CD4-positive, alpha-beta memory T cell (primary cell): ENCODE measurements at regions of chr6 and their contacts with region 1.

Region 1: DNA sequence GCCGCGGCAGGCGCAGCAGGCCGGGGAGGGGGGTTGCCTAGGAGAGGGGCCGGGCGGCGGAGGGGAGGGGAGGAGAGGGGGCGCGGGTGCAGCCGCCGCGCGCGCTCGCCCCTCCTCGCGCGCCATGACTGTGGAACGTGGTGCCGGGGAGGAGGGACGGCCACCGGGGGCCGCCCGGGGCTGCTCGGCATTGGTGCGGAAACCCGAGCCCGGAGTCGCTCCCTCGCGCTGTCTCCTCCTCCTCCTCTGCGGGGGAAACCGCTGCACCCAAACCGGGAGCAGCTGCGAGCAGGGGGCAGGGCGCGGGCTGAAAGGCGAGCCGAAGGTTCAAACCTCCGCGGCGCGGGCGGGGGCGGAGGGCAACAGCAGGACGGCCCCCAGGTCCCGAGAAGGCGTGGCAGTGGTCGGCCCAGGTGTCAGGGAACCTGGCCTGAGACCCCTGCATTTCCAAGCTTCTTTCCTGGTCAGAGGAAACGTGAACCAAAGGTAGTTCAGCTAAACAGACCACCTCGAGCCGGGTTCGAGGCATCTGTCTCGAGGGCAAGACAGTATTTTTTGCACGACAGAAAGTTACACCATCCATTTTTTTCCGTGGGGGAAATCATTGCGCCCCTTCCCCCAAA is 1.4 kb upstream of the TRERF1 start:
- DNase-seq: peak; percentile 75 to 82 (median 77)
- H3K4me3 ChIP-seq: peak overlapping the region; percentile 68 to 72
- H3K4me3 Mint-ChIP-seq: peak overlapping the region; percentile 93 to 100 (median 96)
- H3K27ac ChIP-seq: peak overlapping the region; percentile 36
- H3K27ac Mint-ChIP-seq: peak overlapping the region in 3 of 7 donors; percentile 10 to 80 (median 75)
- H3K4me1 ChIP-seq: peaks cover 31% of the 10 kb centered on the region
- H3K4me1 Mint-ChIP-seq: peaks cover 25 to 53% (median 29%) of the 10 kb centered on the region in 4 donors
- H3K27me3 ChIP-seq: no peaks in the 10 kb centered on the region
- H3K27me3 Mint-ChIP-seq: no peaks in the 10 kb centered on the region

Region 2: GRCh38 chr6:42315991-42316378 is 137.2 kb before region 1 on chr6:
- CTCF ChIA-PET with region 1: interaction called, 11 read pairs
- POLR2A ChIA-PET with region 1: no interaction called
- intact Hi-C with region 1: no loop called
- DNase-seq: no peak
- H3K4me3 ChIP-seq: no peak overlapping the region
- H3K4me3 Mint-ChIP-seq: no peak overlapping the region
- H3K27ac ChIP-seq: no peak overlapping the region
- H3K27ac Mint-ChIP-seq: peak overlapping the region in 4 of 7 donors; percentile 37 to 72 (median 57)
- H3K4me1 ChIP-seq: peaks cover 36% of the 10 kb centered on the region
- H3K4me1 Mint-ChIP-seq: peaks cover 45 to 63% (median 56%) of the 10 kb centered on the region in 4 donors
- H3K27me3 ChIP-seq: no peaks in the 10 kb centered on the region
- H3K27me3 Mint-ChIP-seq: no peaks in the 10 kb centered on the region

Region 3: GRCh38 chr6:42390228-42390934 is 62.8 kb before region 1 on chr6:
- CTCF ChIA-PET with region 1: interaction called, 17 read pairs
- POLR2A ChIA-PET with region 1: interaction called, 238 read pairs
- intact Hi-C with region 1: loop called (anchors 1 kb)
- DNase-seq: peak; percentile 73 to 79 (median 77)
- H3K4me3 ChIP-seq: peak overlapping the region; percentile 1 to 42
- H3K4me3 Mint-ChIP-seq: peak overlapping the region; percentile 73 to 85 (median 82)
- H3K27ac ChIP-seq: peak overlapping the region; percentile 79
- H3K27ac Mint-ChIP-seq: peak overlapping the region; percentile 96 to 99 (median 98)
- H3K4me1 ChIP-seq: peaks cover 100% of the 10 kb centered on the region
- H3K4me1 Mint-ChIP-seq: peaks cover 76 to 100% (median 90%) of the 10 kb centered on the region in 4 donors
- H3K27me3 ChIP-seq: no peaks in the 10 kb centered on the region
- H3K27me3 Mint-ChIP-seq: no peaks in the 10 kb centered on the region

Region 4: GRCh38 chr6:42417641-42418112 is 35.5 kb before region 1 on chr6:
- CTCF ChIA-PET with region 1: no interaction called
- POLR2A ChIA-PET with region 1: interaction called, 35 read pairs
- intact Hi-C with region 1: no loop called
- DNase-seq: peak; percentile 45 to 79 (median 63)
- H3K4me3 ChIP-seq: no peak overlapping the region
- H3K4me3 Mint-ChIP-seq: peak overlapping the region; percentile 37 to 76 (median 58)
- H3K27ac ChIP-seq: no peak overlapping the region
- H3K27ac Mint-ChIP-seq: peak overlapping the region; percentile 42 to 85 (median 81)
- H3K4me1 ChIP-seq: peaks cover 44% of the 10 kb centered on the region
- H3K4me1 Mint-ChIP-seq: peaks cover 43 to 81% (median 60%) of the 10 kb centered on the region in 4 donors
- H3K27me3 ChIP-seq: no peaks in the 10 kb centered on the region
- H3K27me3 Mint-ChIP-seq: no peaks in the 10 kb centered on the region

Region 5: DNA sequence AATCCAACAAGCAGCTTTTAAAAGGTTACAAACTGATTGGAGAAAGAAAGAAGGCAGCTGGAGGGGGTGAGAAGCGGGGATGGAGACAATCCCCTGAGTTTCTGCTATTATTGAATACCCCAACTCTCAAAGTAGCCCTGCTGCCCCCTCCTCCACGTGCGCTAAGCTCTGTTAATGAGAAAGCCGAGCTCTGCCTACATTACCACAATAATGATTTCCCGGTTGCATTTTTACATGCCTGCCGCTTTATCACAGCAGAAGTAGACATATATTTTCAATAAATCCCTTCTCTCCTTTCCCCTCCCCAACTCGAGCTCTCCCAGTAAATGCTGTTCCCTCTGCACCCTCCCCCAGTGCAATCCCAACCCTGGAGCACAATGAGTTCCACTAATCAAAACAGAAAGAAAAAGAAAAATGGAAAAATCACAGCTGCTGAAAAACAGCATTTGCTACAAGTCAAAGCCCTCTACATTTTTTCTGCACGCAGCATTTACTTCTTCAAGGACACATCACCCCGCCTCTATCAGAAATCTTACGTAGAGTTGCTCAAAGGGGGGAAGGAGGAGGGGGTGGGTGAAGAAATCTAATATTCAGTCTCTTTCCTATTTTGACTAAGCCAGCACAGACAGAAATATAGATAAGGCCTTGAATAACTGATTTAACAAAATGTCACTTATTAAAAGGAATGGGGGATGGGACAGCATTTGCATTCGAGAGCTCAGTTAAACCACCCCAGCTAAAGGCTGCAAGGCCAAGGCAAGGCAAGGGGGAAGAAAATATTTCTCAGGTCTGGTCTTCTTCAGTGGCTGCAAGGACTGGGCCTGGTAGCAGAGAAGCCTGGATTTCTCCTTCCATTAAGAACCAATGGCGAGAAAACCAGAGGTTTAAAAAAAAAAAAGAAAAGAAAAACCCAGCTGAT is 12.1 kb before region 1 on chr6:
- CTCF ChIA-PET with region 1: interaction called, 4 read pairs
- POLR2A ChIA-PET with region 1: interaction called, 77 read pairs
- intact Hi-C with region 1: loop called (anchors 1 kb)
- DNase-seq: peak in 1 of 5 donors; percentile 71
- H3K4me3 ChIP-seq: peak overlapping the region in 1 of 2 donors; percentile 11
- H3K4me3 Mint-ChIP-seq: peak overlapping the region; percentile 74 to 96 (median 82)
- H3K27ac ChIP-seq: peak overlapping the region; percentile 37
- H3K27ac Mint-ChIP-seq: peak overlapping the region; percentile 77 to 94 (median 86)
- H3K4me1 ChIP-seq: peaks cover 75% of the 10 kb centered on the region
- H3K4me1 Mint-ChIP-seq: peaks cover 45 to 83% (median 65%) of the 10 kb centered on the region in 4 donors
- H3K27me3 ChIP-seq: no peaks in the 10 kb centered on the region
- H3K27me3 Mint-ChIP-seq: no peaks in the 10 kb centered on the region